ENCODE measurements at regions of chr3 and their contacts with region 1.

Region 1: DNA sequence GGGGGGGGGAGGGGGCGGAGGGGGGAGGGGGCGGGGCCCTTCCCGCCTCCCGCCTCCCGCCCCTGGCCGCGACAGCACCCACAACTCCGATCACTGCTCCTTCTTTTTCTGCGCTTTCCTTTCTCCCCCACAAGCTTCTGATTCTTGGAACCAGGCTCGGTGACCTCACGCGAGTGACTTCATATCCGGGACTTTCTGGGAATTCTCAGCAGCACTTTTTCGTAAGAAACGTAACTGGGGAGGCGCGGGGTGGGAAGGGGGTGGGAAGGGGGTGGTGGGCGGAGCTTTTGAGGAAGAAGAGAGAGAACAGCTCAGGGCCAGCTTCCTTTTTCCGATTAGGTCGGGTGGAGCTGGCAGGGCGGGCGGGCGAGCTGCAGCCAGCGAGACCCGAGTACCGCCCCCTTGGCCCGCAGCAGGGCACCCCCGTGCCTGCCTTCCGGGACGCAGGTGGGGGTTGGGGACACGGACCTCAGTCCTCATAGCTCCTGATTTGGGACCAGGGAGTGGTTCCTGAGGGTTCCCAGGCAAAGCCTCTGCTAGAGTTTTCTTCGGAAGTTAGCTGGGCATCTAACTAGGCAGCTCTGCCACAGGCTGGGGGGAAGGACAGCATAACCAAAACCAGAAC is 14.6 kb downstream of the XIRP1 start:
- DNase-seq: peak; percentile 96

Region 2: GRCh38 chr3:37922721-37923568 is 1254.9 kb before region 1 on chr3:
- intact Hi-C with region 1: loop called in 1 of 2 experiments (anchors 10 kb)
- DNase-seq: no peak

Region 3: DNA sequence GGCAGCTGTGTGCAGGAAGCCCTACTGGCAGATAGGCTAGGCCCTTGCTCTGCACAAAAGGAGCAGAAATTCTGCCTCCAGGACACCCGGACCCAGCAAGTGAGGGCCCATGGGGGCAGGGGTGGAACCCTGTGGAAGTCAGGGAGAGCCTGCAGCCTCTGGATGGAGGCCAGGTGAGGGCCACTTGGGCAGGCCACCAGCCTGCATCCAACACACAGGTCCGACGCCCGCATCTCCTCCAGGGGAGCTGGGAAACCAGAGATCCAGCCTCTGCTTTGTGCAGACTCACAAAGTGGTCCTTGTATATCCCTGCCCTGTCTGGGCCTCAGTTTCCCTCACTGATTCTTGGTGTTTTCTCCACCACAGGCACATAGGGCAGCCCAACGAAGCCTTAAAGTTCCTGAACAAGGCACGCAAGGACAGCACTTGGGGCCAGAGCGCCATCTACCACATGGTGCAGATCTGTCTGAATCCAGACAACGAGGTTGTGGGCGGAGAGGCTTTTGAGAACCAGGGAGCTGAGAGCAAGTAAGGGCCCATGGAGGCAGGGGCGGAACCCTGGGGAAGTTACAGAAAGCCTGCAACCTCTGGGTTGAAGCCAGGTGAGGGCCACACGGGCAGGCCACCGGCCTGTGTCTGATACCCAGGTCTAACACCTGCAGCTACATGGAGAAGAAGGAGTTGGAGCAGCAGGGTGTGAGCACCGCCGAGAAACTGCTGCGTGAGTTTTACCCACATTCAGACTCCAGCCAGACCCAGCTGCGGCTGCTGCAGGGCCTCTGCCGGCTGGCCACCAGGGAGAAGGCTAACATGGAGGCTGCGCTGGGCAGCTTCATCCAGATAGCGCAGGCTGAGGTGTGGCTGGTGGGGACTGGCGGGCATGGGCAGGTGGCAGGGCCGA is 41.0 kb before region 1 on chr3:
- intact Hi-C with region 1: no loop called
- DNase-seq: peak; percentile 69

Measured in posterior vena cava (tissue), 2 donors.